Mammary epithelial cell (primary cell): ENCODE measurements at regions of chr16 and their contacts with region 1.

Region 1: GRCh38 chr16:46908540-46909372 is 24.6 kb downstream of the GPT2 start:
- DNase-seq: peak; percentile 12
- H3K4me3 ChIP-seq: no peak overlapping the region
- H3K27ac ChIP-seq: no peak overlapping the region
- H3K4me1 ChIP-seq: no peaks in the 10 kb centered on the region
- H3K27me3 ChIP-seq: no peaks in the 10 kb centered on the region
- CTCF ChIP-seq: peak; percentile 38 to 71

Region 2: DNA sequence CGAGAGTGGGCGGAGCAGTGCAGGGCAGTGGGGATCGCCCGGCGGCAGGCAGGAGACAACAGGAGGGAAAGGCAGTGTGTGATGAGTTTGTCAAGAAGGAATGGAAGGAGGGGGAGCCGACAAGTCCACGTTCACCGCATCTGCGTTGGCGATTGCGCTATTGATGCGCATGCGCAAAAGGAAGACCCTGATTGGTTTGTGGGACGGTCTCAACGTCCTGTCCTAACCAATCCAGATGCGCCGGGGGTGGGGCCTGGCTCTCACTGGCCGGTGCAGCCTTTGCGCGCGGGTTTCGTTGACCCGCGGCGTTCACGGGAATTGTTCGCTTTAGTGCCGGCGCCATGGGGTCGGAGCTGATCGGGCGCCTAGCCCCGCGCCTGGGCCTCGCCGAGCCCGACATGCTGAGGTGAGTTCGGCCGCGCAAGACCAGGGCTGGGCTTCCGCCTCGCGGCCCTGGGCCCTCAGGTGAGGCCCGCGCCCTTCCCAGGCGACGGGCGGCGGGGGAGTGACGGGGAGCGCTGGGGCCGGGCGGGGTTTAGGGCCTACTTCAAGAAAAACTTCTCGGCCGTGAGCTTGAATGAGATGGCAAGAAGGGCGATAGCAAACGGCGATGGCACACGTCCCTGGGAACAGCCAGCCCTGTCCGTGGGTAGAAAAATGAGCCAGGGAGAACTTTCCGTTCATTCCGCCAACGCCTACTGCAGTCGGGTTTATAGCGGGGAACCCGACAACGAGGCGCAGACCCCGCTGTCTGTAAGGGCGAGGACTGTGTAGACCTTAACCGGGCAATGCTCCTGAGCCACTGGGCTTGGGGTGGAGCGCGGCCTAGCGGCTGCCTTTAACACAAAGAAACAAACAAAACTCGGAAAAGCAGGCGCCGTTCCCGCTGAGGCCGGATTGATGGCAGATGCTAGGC is 219.1 kb before region 1 on chr16 and contains the start of gene ORC6:
- CTCF ChIA-PET with region 1: no interaction called
- dilution Hi-C with region 1: no loop called
- in situ Hi-C with region 1: no loop called
- intact Hi-C with region 1: loop called (anchors 5 kb)
- DNase-seq: peak; percentile 95
- H3K4me3 ChIP-seq: peak within 1 kb of the TSS; percentile 81 to 98 (median 90)
- H3K27ac ChIP-seq: peak within 1 kb of the TSS; percentile 80
- H3K4me1 ChIP-seq: peaks cover 21% of the 10 kb centered on the region
- H3K27me3 ChIP-seq: no peaks in the 10 kb centered on the region
- CTCF ChIP-seq: peak; percentile 48 to 77
- total RNA-seq, gene ORC6: 2.8 to 28.2 TPM

Region 3: DNA sequence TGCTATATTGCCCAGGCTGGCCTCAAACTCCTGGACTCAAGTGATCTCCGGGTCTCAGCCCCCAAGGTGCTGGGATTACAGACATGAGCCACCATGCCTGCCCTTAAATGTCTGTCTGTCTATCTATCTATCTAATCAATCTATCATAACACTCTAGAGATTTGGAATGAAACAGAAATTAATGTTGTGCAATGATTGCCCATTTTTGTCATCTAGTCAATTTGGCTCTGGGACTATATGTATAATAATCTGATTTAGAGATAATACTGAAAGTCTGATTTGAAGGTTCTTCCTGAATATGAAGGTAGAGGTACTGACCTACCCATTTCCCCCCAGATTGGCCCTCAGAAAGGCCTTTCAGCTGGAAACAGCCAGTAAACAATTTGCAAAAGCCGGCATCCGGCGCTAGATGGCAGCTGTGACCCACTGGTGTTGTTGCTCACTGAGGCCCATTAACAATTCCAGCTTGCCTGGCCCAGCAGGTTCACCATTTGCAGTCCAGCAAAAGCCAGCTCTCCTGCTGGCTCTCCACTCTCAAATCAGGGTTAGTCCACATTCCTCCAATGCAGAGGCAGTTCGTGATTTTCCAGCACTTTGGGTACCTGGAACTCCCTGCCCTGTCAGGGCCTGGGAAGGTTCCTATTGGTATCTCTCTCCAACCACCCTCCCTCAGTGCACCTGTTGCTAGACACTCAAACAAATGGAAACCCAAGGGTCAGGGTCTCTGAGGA is 54.9 kb before region 1 on chr16:
- CTCF ChIA-PET with region 1: interaction called, 4 read pairs
- dilution Hi-C with region 1: no loop called
- in situ Hi-C with region 1: loop called in 1 of 2 experiments (anchors 5 kb)
- intact Hi-C with region 1: loop called (anchors 1 kb)
- DNase-seq: peak; percentile 49
- H3K4me3 ChIP-seq: no peak overlapping the region
- H3K27ac ChIP-seq: no peak overlapping the region
- H3K4me1 ChIP-seq: no peaks in the 10 kb centered on the region
- H3K27me3 ChIP-seq: no peaks in the 10 kb centered on the region
- CTCF ChIP-seq: peak; percentile 88 to 94

Region 4: DNA sequence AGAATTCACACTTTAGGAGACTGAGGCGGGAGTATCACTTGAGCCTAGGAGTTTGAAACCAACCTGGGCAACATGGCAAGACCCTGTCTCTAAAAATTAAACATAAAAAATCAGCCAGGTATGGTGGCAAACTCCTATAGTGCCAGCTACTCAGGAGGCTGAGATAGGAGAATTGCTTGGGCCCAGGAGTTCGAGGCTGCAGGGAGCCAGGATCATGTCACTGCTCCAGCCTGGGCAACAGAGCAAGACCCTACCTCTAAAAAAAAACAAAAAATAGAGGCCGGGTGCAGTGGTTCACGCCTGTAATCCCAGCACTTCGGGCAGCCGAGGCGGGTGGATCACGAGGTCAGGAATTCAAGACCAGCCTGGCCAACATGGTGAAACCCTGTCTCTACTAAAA is 33.5 kb before region 1 on chr16:
- CTCF ChIA-PET with region 1: no interaction called
- dilution Hi-C with region 1: loop called (anchors 5 kb)
- in situ Hi-C with region 1: no loop called
- intact Hi-C with region 1: no loop called
- DNase-seq: no peak
- H3K4me3 ChIP-seq: no peak overlapping the region
- H3K27ac ChIP-seq: no peak overlapping the region
- H3K4me1 ChIP-seq: no peaks in the 10 kb centered on the region
- H3K27me3 ChIP-seq: no peaks in the 10 kb centered on the region
- CTCF ChIP-seq: no peak

Region 5: DNA sequence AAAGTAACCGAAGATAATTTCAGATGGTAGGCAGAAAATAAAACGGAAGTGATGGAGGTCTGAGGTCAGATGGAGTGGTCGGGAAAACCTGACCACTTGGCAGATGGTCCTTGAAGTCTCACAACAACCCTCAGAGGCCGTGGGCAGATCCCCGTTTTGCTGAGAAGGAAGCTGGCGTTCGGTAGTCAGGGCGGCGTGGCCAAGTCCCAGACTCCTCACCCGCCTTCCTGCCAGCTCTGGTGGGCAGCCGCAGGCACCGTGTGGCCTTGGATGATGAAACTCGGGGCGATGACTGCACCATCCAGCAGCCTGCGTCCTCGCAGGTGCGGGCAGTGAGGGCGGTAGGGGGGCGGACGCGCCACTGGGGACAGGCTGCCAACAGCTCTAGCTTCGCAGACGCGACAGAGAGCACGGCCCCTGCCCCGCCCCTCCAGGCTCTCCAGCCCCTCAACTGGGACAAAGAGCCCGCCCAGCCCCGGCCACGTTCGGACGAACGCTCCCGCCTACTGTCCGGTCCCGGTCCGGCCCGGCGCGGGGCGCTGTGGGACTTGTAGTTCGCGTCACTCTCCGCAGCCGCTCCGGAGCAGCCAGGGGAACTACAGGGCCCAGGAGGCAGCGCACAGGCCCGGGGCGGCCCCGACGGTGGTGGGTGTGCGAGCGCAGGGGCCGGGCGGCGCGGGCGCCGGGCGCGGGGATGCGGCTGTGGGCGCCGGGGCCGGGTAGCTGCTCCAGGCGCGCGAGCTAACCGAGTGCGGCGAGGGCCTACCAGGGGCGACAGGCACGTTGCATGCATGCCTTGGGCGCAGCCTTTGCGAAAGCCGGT is 24.9 kb before region 1 on chr16 and contains the start of gene GPT2:
- CTCF ChIA-PET with region 1: no interaction called
- dilution Hi-C with region 1: loop called (anchors 5 kb)
- in situ Hi-C with region 1: no loop called
- intact Hi-C with region 1: loop called (anchors 2 kb)
- DNase-seq: peak; percentile 95
- H3K4me3 ChIP-seq: peak within 1 kb of the TSS; percentile 64 to 91 (median 91)
- H3K27ac ChIP-seq: peak within 1 kb of the TSS; percentile 74
- H3K4me1 ChIP-seq: peaks cover 23% of the 10 kb centered on the region
- H3K27me3 ChIP-seq: no peaks in the 10 kb centered on the region
- CTCF ChIP-seq: no peak
- total RNA-seq, gene GPT2: 59.9 to 81.5 TPM

Region 6: GRCh38 chr16:46937536-46937935 is 28.8 kb after region 1 on chr16:
- CTCF ChIA-PET with region 1: interaction called, 10 read pairs
- dilution Hi-C with region 1: no loop called
- in situ Hi-C with region 1: no loop called
- intact Hi-C with region 1: no loop called
- DNase-seq: no peak
- H3K4me3 ChIP-seq: no peak overlapping the region
- H3K27ac ChIP-seq: no peak overlapping the region
- H3K4me1 ChIP-seq: no peaks in the 10 kb centered on the region
- H3K27me3 ChIP-seq: no peaks in the 10 kb centered on the region
- CTCF ChIP-seq: no peak

Region 7: DNA sequence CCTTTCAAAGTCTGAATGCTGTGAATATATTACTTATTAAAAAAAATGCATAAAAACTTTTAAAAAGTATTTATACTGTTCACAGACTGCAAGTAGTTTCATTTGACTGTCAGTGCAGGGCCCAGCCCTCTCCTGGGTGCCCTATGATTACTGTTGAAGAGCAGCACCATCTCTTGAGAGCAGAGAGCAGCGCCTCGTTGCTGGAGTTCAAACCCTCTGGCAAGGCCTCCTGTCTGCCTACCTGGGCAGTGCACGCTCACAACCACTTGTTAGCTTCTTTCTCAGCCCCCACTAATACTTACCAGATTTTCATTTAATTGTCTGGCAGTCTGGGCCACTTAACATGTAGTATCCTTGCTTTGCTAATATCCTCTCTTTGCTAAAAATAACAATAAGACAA is 785.8 kb after region 1 on chr16:
- CTCF ChIA-PET with region 1: no interaction called
- dilution Hi-C with region 1: no loop called
- in situ Hi-C with region 1: no loop called
- intact Hi-C with region 1: no loop called
- DNase-seq: no peak
- H3K4me3 ChIP-seq: no peak overlapping the region
- H3K27ac ChIP-seq: no peak overlapping the region
- H3K4me1 ChIP-seq: no peaks in the 10 kb centered on the region
- H3K27me3 ChIP-seq: no peaks in the 10 kb centered on the region
- CTCF ChIP-seq: peak in 1 of 2 donors; percentile 5